ENCODE measurements at regions of chr1 and their contacts with region 1.

Region 1: GRCh38 chr1:147599362-147600118 is 58.2 kb downstream of the BCL9 start:
- DNase-seq: peak; percentile 98
- H3K4me3 Mint-ChIP-seq: peak overlapping the region; percentile 82
- H3K27ac Mint-ChIP-seq: peak overlapping the region; percentile 74
- H3K4me1 Mint-ChIP-seq: peaks cover 24% of the 10 kb centered on the region
- H3K27me3 Mint-ChIP-seq: no peaks in the 10 kb centered on the region

Region 2: GRCh38 chr1:147618077-147618569 is 18.6 kb after region 1 on chr1:
- CTCF ChIA-PET with region 1: interaction called, 5 read pairs
- POLR2A ChIA-PET with region 1: no interaction called
- intact Hi-C with region 1: loop called (anchors 1 kb)
- DNase-seq: peak; percentile 70
- H3K4me3 Mint-ChIP-seq: peak overlapping the region; percentile 9
- H3K27ac Mint-ChIP-seq: peak overlapping the region; percentile 68
- H3K4me1 Mint-ChIP-seq: peaks cover 23% of the 10 kb centered on the region
- H3K27me3 Mint-ChIP-seq: no peaks in the 10 kb centered on the region

Region 3: GRCh38 chr1:147627435-147628110 is 28.0 kb after region 1 on chr1:
- CTCF ChIA-PET with region 1: interaction called, 4 read pairs
- POLR2A ChIA-PET with region 1: no interaction called
- intact Hi-C with region 1: loop called (anchors 2 kb)
- DNase-seq: peak; percentile 57
- H3K4me3 Mint-ChIP-seq: no peak overlapping the region
- H3K27ac Mint-ChIP-seq: no peak overlapping the region
- H3K4me1 Mint-ChIP-seq: peaks cover 24% of the 10 kb centered on the region
- H3K27me3 Mint-ChIP-seq: no peaks in the 10 kb centered on the region

Region 4: GRCh38 chr1:147670317-147671041 is 70.9 kb after region 1 on chr1 and contains the start of gene ACP6:
- CTCF ChIA-PET with region 1: no interaction called
- POLR2A ChIA-PET with region 1: no interaction called
- intact Hi-C with region 1: loop called (anchors 1 kb)
- DNase-seq: peak; percentile 94
- H3K4me3 Mint-ChIP-seq: peak within 1 kb of the TSS; percentile 89
- H3K27ac Mint-ChIP-seq: peak within 1 kb of the TSS; percentile 84
- H3K4me1 Mint-ChIP-seq: peaks cover 18% of the 10 kb centered on the region
- H3K27me3 Mint-ChIP-seq: peaks cover 2% of the 10 kb centered on the region
- total RNA-seq, gene ACP6: 11.6 to 12.5 TPM